Stomach (tissue), 19 donors: ENCODE measurements at regions of chr12 and their contacts with region 1.

Region 1: DNA sequence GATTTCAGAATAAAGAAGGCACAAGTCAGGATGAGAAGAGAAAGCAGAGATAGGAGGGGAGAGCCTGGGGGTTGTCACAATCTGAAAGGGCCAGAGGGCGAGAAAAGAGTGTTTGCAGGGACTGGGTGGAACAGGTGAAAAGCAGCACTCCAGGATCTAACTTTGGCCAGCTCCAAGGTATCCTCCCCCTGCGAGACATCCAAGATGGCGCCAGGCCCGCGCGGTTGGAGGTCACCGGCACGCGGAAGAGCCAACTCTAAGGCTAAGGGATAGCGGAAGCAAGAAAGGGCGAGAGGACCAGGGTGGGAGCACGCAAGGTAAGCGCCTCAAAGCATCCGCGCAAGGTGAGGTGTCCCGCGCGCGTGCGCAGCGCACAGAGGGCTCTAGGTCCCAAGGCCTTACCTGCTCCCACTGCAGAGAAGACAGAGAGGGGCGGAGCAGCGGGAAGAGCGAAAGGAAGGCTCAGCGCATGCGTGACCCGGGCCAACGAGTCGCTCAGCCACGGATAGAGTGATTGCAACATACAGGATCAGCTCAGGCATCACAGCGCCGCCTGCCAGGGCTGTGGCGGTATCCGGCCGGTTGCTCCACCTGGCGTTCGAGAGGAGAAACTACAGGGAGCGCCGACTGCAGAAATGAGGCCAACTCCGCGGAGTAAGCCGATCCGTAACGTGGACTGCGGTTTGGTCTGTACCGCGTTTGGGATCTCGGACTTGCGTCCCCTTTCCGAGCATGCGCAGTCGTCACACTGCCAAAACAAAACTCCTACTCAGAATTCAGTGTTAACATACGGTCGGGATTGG is at the start of gene ATP5MC2:
- DNase-seq: peak; percentile 98 to 100
- H3K4me3 ChIP-seq: peak within 1 kb of the TSS; percentile 56 to 81 (median 61)
- H3K27ac ChIP-seq: peak within 1 kb of the TSS; percentile 83 to 94 (median 87)
- H3K4me1 ChIP-seq: peaks cover 16 to 62% (median 45%) of the 10 kb centered on the region in 4 donors
- H3K27me3 ChIP-seq: peaks cover 0 to 4% (median 0%) of the 10 kb centered on the region in 3 donors
- CTCF ChIP-seq: peak in 6 of 7 experiments; percentile 97 to 100 (median 98)
- EP300 ChIP-seq: no peak
- POLR2A ChIP-seq: no peak
- total RNA-seq, gene ATP5MC2: 75.0 to 255 (median 241) TPM

Region 2: GRCh38 chr12:53543539-53543938 is 132.3 kb before region 1 on chr12:
- intact Hi-C with region 1: loop called (anchors 5 kb)
- DNase-seq: peak; percentile 48 to 88
- H3K4me3 ChIP-seq: no peak overlapping the region
- H3K27ac ChIP-seq: peak overlapping the region in 3 of 5 donors; percentile 60 to 66 (median 66)
- H3K4me1 ChIP-seq: peaks cover 7 to 32% (median 15%) of the 10 kb centered on the region in 4 donors
- H3K27me3 ChIP-seq: no peaks in the 10 kb centered on the region
- CTCF ChIP-seq: peak in 5 of 7 experiments; percentile 71 to 92 (median 85)
- EP300 ChIP-seq: no peak
- POLR2A ChIP-seq: no peak

Region 3: GRCh38 chr12:53618275-53618674 is 57.6 kb before region 1 on chr12:
- intact Hi-C with region 1: loop called (anchors 10 kb)
- DNase-seq: no peak
- H3K4me3 ChIP-seq: peak overlapping the region; percentile 1 to 35 (median 16)
- H3K27ac ChIP-seq: peak overlapping the region in 4 of 5 donors; percentile 3 to 71 (median 48)
- H3K4me1 ChIP-seq: peaks cover 30 to 90% (median 55%) of the 10 kb centered on the region in 4 donors
- H3K27me3 ChIP-seq: no peaks in the 10 kb centered on the region
- CTCF ChIP-seq: no peak
- EP300 ChIP-seq: no peak
- POLR2A ChIP-seq: no peak